ENCODE measurements at regions of chr10 and their contacts with region 1.

Region 1: DNA sequence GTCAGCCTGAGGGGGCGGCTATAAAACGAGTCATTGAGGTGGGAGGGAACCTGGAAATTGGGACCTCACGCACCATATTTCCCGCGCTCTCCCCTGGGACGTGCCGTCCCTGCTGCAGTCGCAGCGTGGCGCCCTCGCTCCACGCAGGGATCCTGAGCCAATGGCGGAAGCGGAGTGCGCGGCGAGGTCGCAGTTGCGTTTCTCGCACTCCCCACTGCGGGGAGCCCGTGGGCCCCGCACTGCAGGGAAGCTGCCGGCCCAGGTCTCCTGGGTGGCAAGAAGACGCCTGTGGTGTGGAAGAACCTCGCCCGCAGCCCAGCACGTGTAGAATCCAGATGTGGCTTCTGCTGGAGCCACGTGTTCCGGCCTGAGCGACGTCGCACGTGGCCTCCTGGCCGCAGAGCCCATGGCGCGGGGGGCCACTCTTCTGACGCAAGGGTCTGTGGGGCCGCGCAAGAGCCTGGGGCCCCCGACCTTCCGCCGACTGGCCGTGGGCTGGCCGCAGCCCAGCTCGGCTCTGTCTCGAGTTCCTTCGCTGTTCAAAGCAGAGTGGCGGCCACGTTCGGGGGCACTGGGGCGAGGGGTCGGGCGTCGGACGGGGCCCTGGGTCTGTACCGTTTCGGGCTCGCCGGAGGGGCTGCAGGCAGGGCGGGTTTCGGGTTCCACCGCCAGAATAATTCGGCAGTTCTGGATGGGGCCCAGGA is 26.4 kb downstream of the HIF1AN start:
- DNase-seq: peak; percentile 36 to 81
- H3K4me3 ChIP-seq: no peak overlapping the region
- H3K27ac ChIP-seq: no peak overlapping the region
- H3K4me1 ChIP-seq: peaks cover 0 to 4% (median 0%) of the 10 kb centered on the region in 4 experiments; a peak in 2 of 7 replicates
- H3K27me3 ChIP-seq: peaks cover 0 to 16% (median 9%) of the 10 kb centered on the region in 4 experiments; a peak in 5 of 7 replicates
- CTCF ChIP-seq: peak; percentile 98 to 100 (median 99)
- EP300 ChIP-seq: no peak
- POLR2A ChIP-seq: no peak; a peak in 1 of 3 replicates
- RAD21 ChIP-seq: peak; percentile 96 to 97

Region 2: GRCh38 chr10:100551196-100551595 is 11.0 kb before region 1 on chr10:
- CTCF ChIA-PET with region 1: interaction called, 57 read pairs
- POLR2A ChIA-PET with region 1: interaction called, 41 read pairs
- DNase-seq: no peak
- H3K4me3 ChIP-seq: no peak overlapping the region
- H3K27ac ChIP-seq: no peak overlapping the region
- H3K4me1 ChIP-seq: no peaks in the 10 kb centered on the region
- H3K27me3 ChIP-seq: no peaks in the 10 kb centered on the region
- CTCF ChIP-seq: no peak
- EP300 ChIP-seq: no peak
- POLR2A ChIP-seq: no peak
- RAD21 ChIP-seq: no peak

Region 3: GRCh38 chr10:100645091-100645490 is 82.9 kb after region 1 on chr10:
- CTCF ChIA-PET with region 1: interaction called, 18 read pairs
- POLR2A ChIA-PET with region 1: interaction called, 3 read pairs
- DNase-seq: no peak
- H3K4me3 ChIP-seq: no peak overlapping the region
- H3K27ac ChIP-seq: no peak overlapping the region
- H3K4me1 ChIP-seq: peaks cover 3 to 29% (median 19%) of the 10 kb centered on the region in 4 experiments; a peak in 5 of 7 replicates
- H3K27me3 ChIP-seq: peaks cover 0 to 5% (median 2%) of the 10 kb centered on the region in 4 experiments; a peak in 1 of 7 replicates
- CTCF ChIP-seq: no peak
- EP300 ChIP-seq: no peak
- POLR2A ChIP-seq: no peak
- RAD21 ChIP-seq: no peak

Region 4: GRCh38 chr10:100728928-100729861 is 167.0 kb after region 1 on chr10:
- CTCF ChIA-PET with region 1: interaction called, 66 read pairs
- POLR2A ChIA-PET with region 1: interaction called, 4 read pairs
- DNase-seq: peak in 1 of 2 experiments; percentile 79
- H3K4me3 ChIP-seq: peak overlapping the region in 1 of 4 experiments; percentile 48; a peak in 2 of 8 replicates
- H3K27ac ChIP-seq: no peak overlapping the region
- H3K4me1 ChIP-seq: peaks cover 4 to 20% (median 11%) of the 10 kb centered on the region in 4 experiments
- H3K27me3 ChIP-seq: peaks cover 94 to 99% (median 97%) of the 10 kb centered on the region in 4 experiments
- CTCF ChIP-seq: peak; percentile 58 to 72 (median 69)
- EP300 ChIP-seq: no peak
- POLR2A ChIP-seq: no peak
- RAD21 ChIP-seq: peak; percentile 50 to 64

Region 5: GRCh38 chr10:100827819-100828737 is 265.9 kb after region 1 on chr10:
- CTCF ChIA-PET with region 1: interaction called, 20 read pairs
- POLR2A ChIA-PET with region 1: interaction called, 3 read pairs
- DNase-seq: peak in 1 of 2 experiments; percentile 74
- H3K4me3 ChIP-seq: peak overlapping the region in 3 of 4 experiments; percentile 26 to 53 (median 28); a peak in 5 of 8 replicates
- H3K27ac ChIP-seq: no peak overlapping the region
- H3K4me1 ChIP-seq: peaks cover 4 to 26% (median 20%) of the 10 kb centered on the region in 4 experiments
- H3K27me3 ChIP-seq: peaks cover 96 to 100% (median 100%) of the 10 kb centered on the region in 4 experiments
- CTCF ChIP-seq: peak in 1 of 3 experiments; percentile 42; a peak in 2 of 4 replicates
- EP300 ChIP-seq: no peak
- POLR2A ChIP-seq: no peak
- RAD21 ChIP-seq: peak; percentile 12 to 52; a peak in 3 of 4 replicates

Region 6: DNA sequence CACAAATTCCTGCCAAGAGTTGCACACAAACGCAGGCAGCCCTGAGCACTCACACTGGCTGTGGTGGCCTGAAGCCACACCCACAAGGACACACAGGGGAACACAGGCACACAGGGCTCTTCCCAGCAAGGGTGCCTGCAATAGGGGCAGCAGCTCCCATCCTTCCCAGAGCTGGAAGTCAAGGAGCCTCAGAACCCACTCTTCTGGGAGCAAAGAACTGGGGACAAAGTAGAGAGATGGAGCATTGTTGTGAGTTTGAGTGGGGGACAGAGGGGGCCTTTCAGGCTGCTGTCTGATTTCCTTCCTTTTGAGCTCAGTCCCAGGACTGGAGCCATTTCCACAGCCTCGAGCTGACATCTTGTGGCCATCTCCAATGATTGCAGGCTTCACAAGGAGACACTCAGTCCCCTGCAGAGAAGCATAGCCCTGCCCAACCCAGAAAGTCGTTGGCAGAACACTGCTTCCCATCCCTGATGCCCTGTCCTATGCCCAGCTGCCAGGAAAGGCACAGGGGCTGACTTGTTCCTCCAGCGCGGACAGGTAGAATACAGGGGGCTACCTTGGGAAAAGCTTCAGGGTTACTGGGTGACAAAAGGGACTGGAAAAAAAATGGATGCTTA is 316.2 kb after region 1 on chr10:
- CTCF ChIA-PET with region 1: interaction called, 81 read pairs
- POLR2A ChIA-PET with region 1: interaction called, 29 read pairs
- DNase-seq: peak; percentile 31 to 71
- H3K4me3 ChIP-seq: no peak overlapping the region
- H3K27ac ChIP-seq: no peak overlapping the region
- H3K4me1 ChIP-seq: peaks cover 0 to 12% (median 7%) of the 10 kb centered on the region in 4 experiments; a peak in 5 of 7 replicates
- H3K27me3 ChIP-seq: peaks cover 0 to 13% (median 6%) of the 10 kb centered on the region in 4 experiments; a peak in 4 of 7 replicates
- CTCF ChIP-seq: peak; percentile 66 to 90 (median 85)
- EP300 ChIP-seq: no peak
- POLR2A ChIP-seq: no peak
- RAD21 ChIP-seq: peak; percentile 97 to 98

Measured in H1 (cell line).